ENCODE measurements at regions of chr4 and their contacts with region 1.

Region 1: DNA sequence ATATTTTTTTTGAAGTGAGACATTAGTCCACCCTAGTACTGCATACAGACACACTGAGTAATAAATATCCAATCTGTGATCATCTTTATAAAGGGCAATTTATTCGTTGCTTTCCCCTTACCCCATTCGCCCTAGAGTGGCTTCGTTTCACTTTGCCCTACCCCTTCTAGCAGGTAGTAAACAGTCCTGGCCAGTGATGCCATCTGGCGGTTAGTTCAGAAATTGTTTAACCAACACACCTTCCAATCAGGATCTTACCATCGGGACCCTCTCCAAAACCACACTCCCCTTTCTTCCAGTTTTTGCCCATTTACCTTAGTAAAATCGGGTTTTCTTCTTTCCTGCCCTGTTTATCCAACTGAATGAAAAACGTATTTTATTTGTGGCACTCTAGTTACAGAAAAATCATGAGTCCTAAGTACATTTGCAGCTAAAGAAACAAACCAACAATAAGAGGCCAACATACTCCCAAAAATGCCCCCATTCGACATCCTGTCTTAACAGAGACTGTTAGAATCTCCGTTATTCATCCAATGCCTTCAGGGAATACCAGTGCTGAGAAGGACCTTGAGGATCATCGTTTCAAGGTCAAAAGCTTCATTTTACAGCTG is 2.2 kb downstream of the PPA2 start:
- DNase-seq: peak in 4 of 5 donors; percentile 73 to 91 (median 84)
- H3K4me3 ChIP-seq: peak overlapping the region; percentile 27 to 93 (median 89)
- H3K27ac ChIP-seq: no peak overlapping the region
- H3K4me1 ChIP-seq: peaks cover 0 to 17% (median 6%) of the 10 kb centered on the region in 3 donors
- H3K27me3 ChIP-seq: no peaks in the 10 kb centered on the region
- CTCF ChIP-seq: peak; percentile 63

Region 2: DNA sequence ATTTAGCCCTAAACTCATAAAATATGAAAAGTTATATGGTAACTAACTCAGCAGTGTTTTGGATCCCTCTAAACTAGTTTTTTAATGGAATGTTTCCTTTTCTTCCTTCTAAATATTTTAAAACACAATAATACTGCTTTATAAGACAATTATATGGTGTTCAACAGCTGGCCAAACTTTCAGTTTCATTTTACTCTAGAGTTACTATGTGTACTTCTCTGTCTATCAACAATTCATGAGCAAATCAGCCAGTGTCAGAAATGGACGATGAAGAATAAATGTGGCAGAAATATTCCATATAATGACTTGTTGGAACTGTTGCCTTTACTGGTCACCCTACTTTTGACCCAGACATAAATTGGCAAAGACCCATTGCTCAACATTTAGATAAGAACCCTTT is 912.2 kb before region 1 on chr4:
- intact Hi-C with region 1: no loop called
- DNase-seq: no peak
- H3K4me3 ChIP-seq: peak overlapping the region in 2 of 3 donors; percentile 3 to 29
- H3K27ac ChIP-seq: no peak overlapping the region
- H3K4me1 ChIP-seq: no peaks in the 10 kb centered on the region
- H3K27me3 ChIP-seq: no peaks in the 10 kb centered on the region
- CTCF ChIP-seq: no peak

Region 3: DNA sequence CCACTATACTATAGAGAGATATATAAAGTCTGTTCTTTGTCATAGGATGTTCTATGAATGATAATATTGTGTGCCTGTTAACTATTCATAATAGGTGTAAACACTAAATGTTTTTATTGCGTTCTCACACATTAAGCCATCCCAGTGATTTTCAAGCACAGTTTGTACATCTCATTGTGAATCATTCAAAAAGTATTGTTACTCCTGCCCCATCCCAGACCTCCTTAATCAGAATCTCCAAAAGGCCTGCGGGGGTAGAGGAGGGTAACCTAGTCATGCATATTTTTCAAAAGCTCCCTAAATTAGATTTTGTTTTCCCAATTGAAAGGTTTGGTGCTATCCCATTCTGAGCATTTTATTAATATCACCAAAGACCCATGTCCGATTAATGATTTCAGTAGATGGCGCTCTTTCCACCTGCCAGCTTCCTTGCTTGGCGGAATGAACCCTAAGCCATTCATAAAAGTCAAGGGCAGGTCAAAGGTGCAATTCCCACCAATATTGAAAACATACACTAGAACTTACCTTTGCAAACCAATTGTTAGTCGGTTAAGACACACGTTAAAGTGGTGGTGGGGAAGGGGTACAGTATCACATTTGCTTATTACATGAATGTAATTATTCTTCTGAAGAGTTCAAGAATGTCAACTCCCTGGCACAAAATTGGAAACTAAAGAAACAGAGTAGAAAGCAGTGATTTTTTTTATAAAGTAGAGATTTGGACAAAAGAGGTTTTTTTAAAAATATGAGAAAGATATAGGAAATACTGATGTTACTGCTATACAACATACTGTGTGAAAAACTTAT is 330.8 kb before region 1 on chr4:
- intact Hi-C with region 1: loop called (anchors 5 kb)
- DNase-seq: peak in 2 of 5 donors; percentile 41 to 60
- H3K4me3 ChIP-seq: no peak overlapping the region
- H3K27ac ChIP-seq: no peak overlapping the region
- H3K4me1 ChIP-seq: no peaks in the 10 kb centered on the region
- H3K27me3 ChIP-seq: no peaks in the 10 kb centered on the region
- CTCF ChIP-seq: peak; percentile 65

Region 4: GRCh38 chr4:105751718-105752299 is 280.1 kb after region 1 on chr4:
- intact Hi-C with region 1: no loop called
- DNase-seq: no peak
- H3K4me3 ChIP-seq: no peak overlapping the region
- H3K27ac ChIP-seq: no peak overlapping the region
- H3K4me1 ChIP-seq: no peaks in the 10 kb centered on the region
- H3K27me3 ChIP-seq: no peaks in the 10 kb centered on the region
- CTCF ChIP-seq: no peak

Measured in kidney (tissue), 22 donors.